ENCODE measurements at regions of chr4 and their contacts with region 1.

Region 1: DNA sequence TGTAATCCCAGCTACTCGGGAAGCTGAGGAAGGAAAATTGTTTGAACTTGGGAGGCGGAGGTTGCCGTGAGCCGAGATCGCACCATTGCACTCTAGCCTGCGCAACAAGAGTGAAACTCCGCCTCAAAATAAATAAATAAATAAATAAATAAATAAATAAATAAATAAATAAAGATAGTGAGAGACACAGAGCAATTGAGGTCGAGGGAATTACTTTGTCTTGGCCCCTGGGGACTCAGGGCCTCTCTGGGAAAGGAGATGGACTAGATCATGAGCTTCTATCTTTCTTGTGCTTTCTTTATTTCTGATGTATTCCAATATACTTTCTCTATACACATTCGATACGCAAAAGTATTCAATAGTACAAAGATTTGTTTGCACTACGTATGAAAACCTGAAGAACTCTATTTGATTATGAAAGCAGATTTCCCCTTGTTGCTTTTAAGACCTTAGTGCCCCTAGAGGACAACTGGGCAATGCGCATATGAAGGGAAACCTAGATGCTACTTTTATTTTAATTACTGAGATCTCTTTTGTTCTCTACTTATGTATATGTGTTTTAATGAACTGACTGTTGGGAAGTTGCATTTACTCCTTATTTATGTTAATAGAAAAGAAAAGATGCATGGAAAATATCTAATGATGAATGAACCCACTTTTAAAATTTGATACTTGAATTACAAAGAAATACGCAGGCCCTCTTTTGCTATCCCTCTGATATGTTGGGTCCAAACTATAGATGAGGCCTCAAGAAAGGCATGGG is 12.8 kb upstream of the ELOVL6 start:
- DNase-seq: no peak
- H3K4me3 ChIP-seq: no peak overlapping the region
- H3K27ac ChIP-seq: no peak overlapping the region
- H3K4me1 ChIP-seq: no peaks in the 10 kb centered on the region
- H3K27me3 ChIP-seq: no peaks in the 10 kb centered on the region
- CTCF ChIP-seq: peak; percentile 59 to 75 (median 65)
- POLR2A ChIP-seq: no peak

Region 2: DNA sequence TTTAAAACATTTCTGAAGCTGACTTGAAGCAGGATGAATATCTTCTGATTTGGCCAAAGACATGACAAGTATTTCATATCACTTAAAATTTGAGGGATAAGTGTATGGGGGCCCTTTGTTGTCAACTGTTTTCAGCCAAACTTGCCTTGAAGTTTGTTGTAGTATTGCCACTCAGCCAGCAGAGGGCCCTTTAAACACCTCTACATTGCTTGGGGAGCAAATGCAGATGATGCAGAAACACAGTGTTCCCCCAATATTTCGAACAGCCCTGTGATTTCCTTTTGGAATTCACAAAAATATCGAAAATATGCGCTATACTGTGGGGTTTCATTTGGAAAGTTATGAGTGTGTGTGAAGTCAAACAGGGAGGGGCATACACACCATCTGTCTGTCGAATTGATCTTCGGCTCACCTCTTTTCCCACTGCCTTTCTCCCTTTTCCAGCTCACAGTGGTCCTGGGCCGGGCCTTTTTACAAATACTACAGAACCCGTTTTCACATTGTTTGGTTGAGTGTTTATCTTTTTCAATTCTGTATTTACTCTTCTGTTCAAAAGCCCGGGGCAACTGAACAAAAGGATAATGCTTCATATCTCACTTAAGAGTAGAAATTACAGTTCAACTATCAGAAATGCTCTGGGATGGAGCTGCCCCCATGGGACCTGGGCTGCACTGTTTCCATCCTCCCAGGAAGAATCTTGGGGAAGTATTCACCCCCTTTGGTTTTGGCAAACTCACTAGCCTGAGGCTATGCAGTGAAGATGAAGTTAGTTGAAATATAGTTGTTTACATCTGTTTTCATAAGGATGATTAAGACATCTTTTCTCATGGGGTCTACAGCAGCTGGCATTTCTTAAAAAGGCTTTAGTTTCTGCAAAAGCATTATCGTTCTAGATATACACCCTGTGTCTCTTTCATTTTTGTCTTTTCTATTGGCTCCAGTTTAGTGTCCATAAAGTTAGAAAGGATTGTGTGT is 160.9 kb before region 1 on chr4:
- intact Hi-C with region 1: loop called (anchors 10 kb)
- DNase-seq: peak; percentile 23 to 42
- H3K4me3 ChIP-seq: no peak overlapping the region
- H3K27ac ChIP-seq: no peak overlapping the region
- H3K4me1 ChIP-seq: no peaks in the 10 kb centered on the region
- H3K27me3 ChIP-seq: no peaks in the 10 kb centered on the region
- CTCF ChIP-seq: peak; percentile 62 to 73 (median 70)
- POLR2A ChIP-seq: no peak